ENCODE measurements at regions of chr10 and their contacts with region 1.

Region 1: DNA sequence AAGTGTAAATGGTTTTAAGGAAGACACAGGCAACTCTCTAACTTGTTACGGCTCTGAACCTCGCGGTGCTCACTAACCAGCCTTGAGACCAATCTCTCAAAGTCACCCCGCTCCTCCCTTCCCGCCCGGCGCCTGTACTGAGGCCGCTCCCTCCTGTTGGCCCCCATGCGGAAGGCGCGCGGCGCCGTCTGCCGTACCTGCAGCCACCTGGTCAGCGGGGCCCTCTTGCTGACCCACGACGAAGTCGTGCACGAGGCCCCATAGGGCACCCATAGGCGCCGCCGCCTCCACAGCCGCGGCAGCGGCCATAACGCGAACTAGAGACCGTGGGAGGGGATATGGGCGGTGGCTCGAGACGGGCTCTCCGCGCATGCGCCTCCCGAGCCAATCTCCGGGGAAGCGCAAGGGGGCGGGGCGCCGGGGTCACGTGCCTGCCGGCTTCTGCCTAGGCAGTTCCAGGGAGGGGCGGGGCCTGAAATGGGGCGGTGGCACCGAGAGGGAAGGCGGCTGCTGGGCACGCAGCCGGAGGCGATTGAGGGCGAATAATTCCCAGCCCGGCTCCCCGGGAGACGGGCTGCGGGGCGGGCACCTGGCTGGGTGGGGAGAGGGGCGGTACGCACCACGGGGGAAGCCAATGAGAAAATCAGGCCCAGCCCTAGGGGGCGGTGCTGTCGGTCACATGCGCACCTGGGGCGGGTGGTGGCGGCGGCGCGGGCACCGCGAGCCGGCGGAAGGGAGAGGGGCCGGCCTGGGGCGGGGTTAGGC is at the start of gene MMS19:
- DNase-seq: peak; percentile 99 to 100 (median 99)
- H3K4me3 ChIP-seq: peak within 1 kb of the TSS; percentile 86 to 97
- H3K4me3 Mint-ChIP-seq: peak within 1 kb of the TSS; percentile 96 to 100 (median 98)
- H3K27ac ChIP-seq: peak within 1 kb of the TSS; percentile 85
- H3K27ac Mint-ChIP-seq: peak within 1 kb of the TSS; percentile 96 to 99 (median 97)
- H3K4me1 ChIP-seq: peaks cover 48% of the 10 kb centered on the region
- H3K4me1 Mint-ChIP-seq: peaks cover 28 to 54% (median 44%) of the 10 kb centered on the region in 4 donors
- H3K27me3 ChIP-seq: peaks cover under 1% of the 10 kb centered on the region
- H3K27me3 Mint-ChIP-seq: peaks cover 7 to 8% of the 10 kb centered on the region in 2 donors
- total RNA-seq, gene MMS19: 109 to 111 TPM

Region 2: GRCh38 chr10:97292097-97292862 is 206.0 kb before region 1 on chr10 and contains the start of gene ARHGAP19:
- CTCF ChIA-PET with region 1: no interaction called
- POLR2A ChIA-PET with region 1: no interaction called
- intact Hi-C with region 1: loop called (anchors 1 kb)
- DNase-seq: peak; percentile 94 to 98 (median 95)
- H3K4me3 ChIP-seq: peak within 1 kb of the TSS; percentile 76 to 85
- H3K4me3 Mint-ChIP-seq: peak within 1 kb of the TSS; percentile 90 to 99 (median 94)
- H3K27ac ChIP-seq: peak within 1 kb of the TSS; percentile 78
- H3K27ac Mint-ChIP-seq: peak within 1 kb of the TSS; percentile 85 to 97 (median 95)
- H3K4me1 ChIP-seq: peaks cover 11% of the 10 kb centered on the region
- H3K4me1 Mint-ChIP-seq: peaks cover 8 to 25% (median 20%) of the 10 kb centered on the region in 4 donors
- H3K27me3 ChIP-seq: no peaks in the 10 kb centered on the region
- H3K27me3 Mint-ChIP-seq: peaks cover 1 to 3% of the 10 kb centered on the region in 2 donors
- total RNA-seq, gene ARHGAP19: 17.0 to 19.3 TPM

Region 3: GRCh38 chr10:97334370-97335175 is 163.7 kb before region 1 on chr10 and contains the start of gene FRAT2:
- CTCF ChIA-PET with region 1: no interaction called
- POLR2A ChIA-PET with region 1: no interaction called
- intact Hi-C with region 1: loop called (anchors 1 kb)
- DNase-seq: peak; percentile 86 to 95 (median 92)
- H3K4me3 ChIP-seq: peak within 1 kb of the TSS; percentile 64 to 67
- H3K4me3 Mint-ChIP-seq: peak within 1 kb of the TSS; percentile 88 to 95 (median 92)
- H3K27ac ChIP-seq: peak within 1 kb of the TSS; percentile 98
- H3K27ac Mint-ChIP-seq: peak within 1 kb of the TSS; percentile 88 to 95 (median 93)
- H3K4me1 ChIP-seq: peaks cover 35% of the 10 kb centered on the region
- H3K4me1 Mint-ChIP-seq: peaks cover 26 to 44% (median 34%) of the 10 kb centered on the region in 4 donors
- H3K27me3 ChIP-seq: no peaks in the 10 kb centered on the region
- H3K27me3 Mint-ChIP-seq: peaks cover 0 to 1% of the 10 kb centered on the region in 2 donors
- total RNA-seq, gene FRAT2: 28.7 to 30.4 TPM

Region 4: DNA sequence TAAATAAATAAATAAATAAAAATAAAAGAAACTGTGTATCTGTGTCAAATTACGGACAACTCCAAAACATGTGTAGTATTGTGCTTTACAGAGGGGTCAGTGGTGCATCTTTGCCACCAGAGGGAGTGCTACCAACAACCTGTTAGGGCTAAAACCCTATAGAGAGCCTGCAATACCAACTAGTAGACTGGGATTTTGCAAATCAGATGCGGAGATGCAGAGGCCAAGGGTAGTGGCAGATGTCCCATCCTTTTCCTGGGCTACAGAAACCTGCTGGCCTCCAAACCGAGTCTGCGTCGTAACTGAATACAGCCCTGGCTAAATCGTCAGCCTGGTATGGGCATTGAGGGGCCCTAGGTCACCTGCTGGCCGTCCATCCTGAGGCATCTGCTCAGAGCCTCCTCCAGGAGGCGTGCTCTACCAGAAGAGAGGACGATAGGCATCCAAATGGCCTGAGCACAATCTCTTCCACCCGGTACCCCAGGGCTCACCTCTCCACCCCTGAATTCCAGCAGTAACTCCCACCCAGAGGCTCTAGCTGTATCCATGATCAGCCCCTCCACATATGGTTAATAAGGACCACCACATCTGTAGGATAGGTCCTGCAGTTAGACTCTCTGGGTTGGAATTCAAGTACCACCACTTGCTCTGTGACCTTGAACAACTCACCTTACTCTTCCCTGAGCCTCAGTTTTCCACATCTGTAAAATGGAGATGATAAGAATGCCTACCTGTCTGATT is 90.9 kb before region 1 on chr10:
- CTCF ChIA-PET with region 1: interaction called, 3 read pairs
- POLR2A ChIA-PET with region 1: no interaction called
- intact Hi-C with region 1: loop called (anchors 1 kb)
- DNase-seq: peak; percentile 74 to 78 (median 77)
- H3K4me3 ChIP-seq: peak overlapping the region; percentile 35 to 48
- H3K4me3 Mint-ChIP-seq: peak overlapping the region in 7 of 8 donors; percentile 36 to 77 (median 74)
- H3K27ac ChIP-seq: no peak overlapping the region
- H3K27ac Mint-ChIP-seq: peak overlapping the region; percentile 54 to 88 (median 78)
- H3K4me1 ChIP-seq: peaks cover 6% of the 10 kb centered on the region
- H3K4me1 Mint-ChIP-seq: peaks cover 3 to 12% (median 9%) of the 10 kb centered on the region in 4 donors
- H3K27me3 ChIP-seq: no peaks in the 10 kb centered on the region
- H3K27me3 Mint-ChIP-seq: no peaks in the 10 kb centered on the region

Region 5: DNA sequence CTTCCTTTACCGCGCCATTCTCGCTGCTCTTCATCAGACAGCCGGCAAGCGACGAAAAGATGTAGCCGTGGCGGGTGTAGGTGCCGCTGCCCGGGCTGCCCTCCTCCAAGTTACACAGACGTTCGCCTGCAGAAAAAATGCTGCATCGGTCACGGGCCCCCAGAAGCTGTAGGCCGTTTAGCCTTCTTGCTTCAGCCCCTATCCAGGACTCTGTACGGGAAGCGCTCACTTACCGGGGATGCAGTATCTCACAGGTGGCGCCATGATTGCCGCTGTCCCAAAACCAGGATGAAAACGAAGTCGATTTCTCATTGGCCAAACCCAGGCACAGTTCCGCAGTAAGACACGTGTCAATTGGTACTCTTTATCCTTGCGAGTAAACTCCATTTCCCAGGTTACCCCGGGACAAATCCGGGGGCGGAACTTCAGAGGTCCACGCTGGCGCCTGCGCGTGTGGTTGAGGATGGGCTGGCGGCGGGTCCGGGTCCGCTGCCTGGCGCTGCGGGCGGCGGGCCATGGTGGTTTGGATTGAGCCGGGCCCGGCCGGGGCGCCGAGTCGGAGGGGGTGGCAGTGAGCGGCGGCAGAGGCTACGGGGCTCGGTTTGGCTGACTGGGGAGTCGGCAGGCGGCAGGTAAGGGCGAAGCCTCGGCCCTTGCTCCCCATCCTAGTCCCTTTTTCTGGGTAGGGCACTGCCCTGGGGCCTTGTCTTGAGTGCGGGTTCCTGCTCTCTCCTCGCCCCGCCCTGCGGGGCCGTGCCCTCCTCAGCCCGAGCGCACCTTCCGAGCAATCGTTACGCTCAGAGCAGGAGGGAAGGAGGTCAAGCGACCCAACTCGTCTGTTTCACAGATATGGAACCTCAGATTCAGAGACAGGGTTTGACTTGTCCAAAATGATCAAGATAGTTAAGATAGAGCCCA is 52.3 kb before region 1 on chr10 and contains the starts of genes EXOSC1 and ZDHHC16:
- CTCF ChIA-PET with region 1: no interaction called
- POLR2A ChIA-PET with region 1: no interaction called
- intact Hi-C with region 1: loop called (anchors 1 kb)
- DNase-seq: peak; percentile 88 to 95 (median 89)
- H3K4me3 ChIP-seq: peak within 1 kb of the TSS; percentile 79 to 93
- H3K4me3 Mint-ChIP-seq: peak within 1 kb of the TSS; percentile 97 to 100 (median 99)
- H3K27ac ChIP-seq: peak within 1 kb of the TSS; percentile 80
- H3K27ac Mint-ChIP-seq: peak within 1 kb of the TSS; percentile 86 to 97 (median 95)
- H3K4me1 ChIP-seq: peaks cover 40% of the 10 kb centered on the region
- H3K4me1 Mint-ChIP-seq: peaks cover 23 to 59% (median 48%) of the 10 kb centered on the region in 4 donors
- H3K27me3 ChIP-seq: no peaks in the 10 kb centered on the region
- H3K27me3 Mint-ChIP-seq: no peaks in the 10 kb centered on the region
- total RNA-seq, gene EXOSC1: 60.6 to 62.7 TPM
- total RNA-seq, gene ZDHHC16: 29.6 to 29.7 TPM

Region 6: GRCh38 chr10:97479939-97480338 is 18.3 kb before region 1 on chr10:
- CTCF ChIA-PET with region 1: no interaction called
- POLR2A ChIA-PET with region 1: no interaction called
- intact Hi-C with region 1: no loop called
- DNase-seq: no peak
- H3K4me3 ChIP-seq: no peak overlapping the region
- H3K4me3 Mint-ChIP-seq: no peak overlapping the region
- H3K27ac ChIP-seq: no peak overlapping the region
- H3K27ac Mint-ChIP-seq: peak overlapping the region in 1 of 7 donors; percentile 84
- H3K4me1 ChIP-seq: no peaks in the 10 kb centered on the region
- H3K4me1 Mint-ChIP-seq: peaks cover 0 to 9% (median 4%) of the 10 kb centered on the region in 4 donors
- H3K27me3 ChIP-seq: no peaks in the 10 kb centered on the region
- H3K27me3 Mint-ChIP-seq: no peaks in the 10 kb centered on the region

Region 7: GRCh38 chr10:97553575-97554031 is 55.3 kb after region 1 on chr10:
- CTCF ChIA-PET with region 1: interaction called, 5 read pairs
- POLR2A ChIA-PET with region 1: interaction called, 4 read pairs
- intact Hi-C with region 1: loop called (anchors 1 kb)
- DNase-seq: peak in 4 of 5 donors; percentile 36 to 47 (median 40)
- H3K4me3 ChIP-seq: no peak overlapping the region
- H3K4me3 Mint-ChIP-seq: no peak overlapping the region
- H3K27ac ChIP-seq: no peak overlapping the region
- H3K27ac Mint-ChIP-seq: no peak overlapping the region
- H3K4me1 ChIP-seq: no peaks in the 10 kb centered on the region
- H3K4me1 Mint-ChIP-seq: peaks cover 0 to 3% (median under 1%) of the 10 kb centered on the region in 4 donors
- H3K27me3 ChIP-seq: no peaks in the 10 kb centered on the region
- H3K27me3 Mint-ChIP-seq: no peaks in the 10 kb centered on the region

Region 8: GRCh38 chr10:97640174-97640867 is 142.1 kb after region 1 on chr10 and contains the start of gene PI4K2A:
- CTCF ChIA-PET with region 1: no interaction called
- POLR2A ChIA-PET with region 1: no interaction called
- intact Hi-C with region 1: loop called (anchors 1 kb)
- DNase-seq: peak; percentile 98 to 99 (median 98)
- H3K4me3 ChIP-seq: peak within 1 kb of the TSS; percentile 83 to 97
- H3K4me3 Mint-ChIP-seq: peak within 1 kb of the TSS; percentile 94 to 99 (median 97)
- H3K27ac ChIP-seq: peak within 1 kb of the TSS; percentile 68
- H3K27ac Mint-ChIP-seq: peak within 1 kb of the TSS; percentile 84 to 97 (median 91)
- H3K4me1 ChIP-seq: peaks cover 15% of the 10 kb centered on the region
- H3K4me1 Mint-ChIP-seq: peaks cover 17 to 28% (median 21%) of the 10 kb centered on the region in 4 donors
- H3K27me3 ChIP-seq: no peaks in the 10 kb centered on the region
- H3K27me3 Mint-ChIP-seq: no peaks in the 10 kb centered on the region
- total RNA-seq, gene PI4K2A: 9.8 to 9.9 TPM

Measured in CD4-positive, alpha-beta memory T cell (primary cell).